ENCODE measurements at regions of chr11 and their contacts with region 1.

Region 1: GRCh38 chr11:120511116-120511819 is at the start of gene GRIK4:
- DNase-seq: peak; percentile 63 to 97 (median 82)
- ATAC-seq: peak; percentile 93 to 97 (median 95)
- H3K4me3 ChIP-seq: peak within 1 kb of the TSS in 2 of 4 donors; percentile 38 to 46
- H3K27ac ChIP-seq: no peak within 1 kb of the TSS
- H3K4me1 ChIP-seq: no peaks in the 10 kb centered on the region
- H3K27me3 ChIP-seq: peaks cover 0 to 15% (median 2%) of the 10 kb centered on the region in 4 donors
- CTCF ChIP-seq: peak; percentile 87 to 96 (median 94)
- total RNA-seq, gene GRIK4: not detected

Region 2: DNA sequence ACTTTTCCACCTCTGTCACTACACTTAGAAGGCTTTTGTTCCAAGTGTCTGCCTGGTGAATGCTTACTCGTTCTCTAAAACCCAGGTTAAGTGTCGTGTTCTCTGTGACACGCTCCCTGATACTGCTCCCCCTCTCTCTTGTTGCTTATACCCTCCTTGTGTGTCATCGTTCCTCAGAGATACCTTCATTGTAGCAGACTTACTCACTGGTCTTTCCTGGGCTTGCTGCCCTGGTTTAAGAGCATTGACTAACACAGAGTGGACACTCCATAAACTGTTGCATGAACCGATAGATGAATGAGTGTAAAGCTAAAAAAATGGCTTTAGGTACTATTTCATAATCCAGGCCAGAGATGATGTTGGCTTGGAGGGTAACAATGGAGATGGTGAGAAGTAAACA is 171.6 kb after region 1 on chr11:
- intact Hi-C with region 1: loop called (anchors 2 to 10 kb)
- DNase-seq: no peak
- ATAC-seq: no peak
- H3K4me3 ChIP-seq: no peak overlapping the region
- H3K27ac ChIP-seq: no peak overlapping the region
- H3K4me1 ChIP-seq: no peaks in the 10 kb centered on the region
- H3K27me3 ChIP-seq: no peaks in the 10 kb centered on the region
- CTCF ChIP-seq: no peak

Region 3: DNA sequence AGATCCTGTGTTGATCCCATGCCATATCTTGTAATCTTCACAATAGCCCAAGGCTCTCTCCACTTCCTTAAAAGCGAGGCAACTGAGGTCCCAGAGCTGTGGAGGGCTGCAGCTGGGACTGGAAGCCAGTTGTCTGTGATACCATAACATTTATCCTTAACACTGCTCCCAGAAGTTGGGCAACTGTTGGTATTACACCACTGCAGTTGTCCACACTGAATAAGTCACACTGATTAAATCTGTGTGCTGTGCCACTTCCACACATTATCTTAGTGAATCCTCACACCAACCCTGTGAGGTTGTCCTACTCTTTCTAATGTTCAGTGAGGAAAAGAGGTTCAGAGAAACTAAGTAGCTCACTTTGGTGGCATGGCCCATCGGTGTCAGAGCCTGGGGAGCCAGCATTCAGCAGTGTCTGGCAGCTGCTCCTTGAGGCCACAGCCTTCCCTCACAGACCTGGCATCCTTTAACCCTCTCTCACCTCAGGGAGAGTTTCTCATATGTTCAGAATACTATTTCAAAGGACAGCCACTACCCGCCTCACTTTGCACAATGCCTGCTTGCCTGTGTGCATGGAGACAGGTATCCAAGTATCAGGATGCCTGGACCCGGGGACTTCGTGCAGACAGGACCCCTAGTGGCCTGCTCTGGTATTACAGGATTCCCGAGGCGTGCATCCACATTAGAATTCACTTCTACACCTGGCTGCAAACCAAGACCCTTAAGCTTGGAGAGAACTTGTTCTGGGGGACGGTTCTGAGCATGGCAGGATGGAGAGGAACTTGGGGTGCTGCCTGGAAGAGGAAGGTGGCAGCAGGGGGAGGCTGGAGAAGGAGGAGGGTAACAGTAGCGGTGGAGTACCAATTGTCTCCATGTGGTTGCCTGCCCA is 290.8 kb after region 1 on chr11:
- intact Hi-C with region 1: loop called in 1 of 3 experiments (anchors 5 kb)
- DNase-seq: peak in 5 of 6 donors; percentile 24 to 86 (median 61)
- ATAC-seq: peak in 3 of 4 donors; percentile 75 to 87 (median 84)
- H3K4me3 ChIP-seq: no peak overlapping the region
- H3K27ac ChIP-seq: no peak overlapping the region
- H3K4me1 ChIP-seq: no peaks in the 10 kb centered on the region
- H3K27me3 ChIP-seq: peaks cover 0 to 4% (median 0%) of the 10 kb centered on the region in 4 donors
- CTCF ChIP-seq: peak; percentile 81 to 95 (median 85)

Region 4: DNA sequence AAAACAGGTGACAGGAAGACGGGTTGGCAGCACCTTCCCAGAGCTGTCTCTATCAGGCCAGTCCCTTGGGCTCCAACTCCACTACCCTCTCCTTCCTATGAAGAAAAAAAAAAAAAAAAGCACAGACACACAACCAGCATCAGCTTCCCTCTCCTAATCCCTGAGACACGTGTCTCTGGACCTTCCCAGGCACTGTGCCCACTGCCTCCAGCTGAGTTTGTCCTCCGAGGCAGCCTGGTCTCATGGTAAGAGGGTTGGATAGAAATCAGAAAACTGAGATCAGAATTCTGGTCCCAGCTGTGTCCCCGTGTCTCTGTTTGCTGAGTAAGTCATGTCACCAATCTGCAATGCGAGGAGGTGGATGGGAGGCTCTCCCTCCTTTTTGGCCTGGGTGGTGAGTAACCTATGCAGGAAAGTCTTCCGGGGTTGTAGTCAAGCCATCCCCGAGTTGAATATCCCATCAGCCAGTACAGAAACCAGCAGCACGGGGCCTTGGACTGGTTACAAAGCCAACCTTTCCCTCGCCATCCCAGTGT is 318.9 kb after region 1 on chr11:
- intact Hi-C with region 1: no loop called
- DNase-seq: no peak
- ATAC-seq: no peak
- H3K4me3 ChIP-seq: no peak overlapping the region
- H3K27ac ChIP-seq: no peak overlapping the region
- H3K4me1 ChIP-seq: no peaks in the 10 kb centered on the region
- H3K27me3 ChIP-seq: no peaks in the 10 kb centered on the region
- CTCF ChIP-seq: no peak

Region 5: DNA sequence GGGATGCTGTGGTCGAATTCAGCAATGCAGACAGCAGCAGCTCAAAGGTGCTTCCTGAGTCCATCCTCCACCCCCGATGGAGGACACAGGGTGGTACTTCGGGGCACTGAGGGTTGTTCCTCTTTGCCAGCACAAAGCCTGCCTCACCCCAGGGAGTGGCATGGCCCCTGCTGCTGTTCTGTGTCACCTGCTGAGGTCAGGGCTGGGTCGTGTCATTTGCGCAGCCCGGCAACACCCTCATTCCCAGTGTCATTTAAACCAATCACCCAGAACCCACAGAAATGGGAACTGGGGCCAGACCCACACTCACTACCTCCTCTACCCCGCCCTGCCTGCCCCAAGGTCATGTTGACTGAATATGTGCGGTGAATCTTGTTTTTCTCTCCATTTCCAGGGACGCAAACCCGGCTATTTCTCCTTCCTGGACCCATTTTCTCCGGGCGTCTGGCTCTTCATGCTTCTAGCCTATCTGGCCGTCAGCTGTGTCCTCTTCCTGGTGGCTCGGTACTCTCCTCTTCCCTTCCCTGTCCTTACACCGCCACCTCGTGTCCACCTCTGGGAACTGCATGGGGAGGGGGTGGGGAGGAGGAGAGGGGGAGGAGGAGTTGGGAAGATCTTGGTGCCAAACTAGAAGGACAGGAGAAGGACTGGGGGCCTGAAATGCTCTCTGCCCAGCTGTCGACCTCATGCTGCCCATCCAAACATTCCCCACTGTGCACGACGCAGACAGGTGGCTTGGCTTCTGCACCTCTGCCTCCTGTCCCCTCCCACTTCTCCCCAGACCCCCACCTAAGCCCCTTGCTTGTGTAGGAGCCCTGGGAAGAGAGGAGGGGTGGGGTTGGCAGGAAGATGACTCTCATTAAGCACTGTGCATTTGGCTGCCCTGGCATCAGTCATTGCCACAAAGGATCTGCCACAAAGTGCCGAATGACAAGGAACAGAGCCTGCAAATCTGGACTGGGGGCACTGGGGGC is 441.5 kb after region 1 on chr11:
- intact Hi-C with region 1: loop called in 1 of 3 experiments (anchors 10 kb)
- DNase-seq: peak; percentile 61 to 90 (median 79)
- ATAC-seq: peak; percentile 88 to 100 (median 98)
- H3K4me3 ChIP-seq: peak overlapping the region in 1 of 4 donors; percentile 22
- H3K27ac ChIP-seq: no peak overlapping the region
- H3K4me1 ChIP-seq: no peaks in the 10 kb centered on the region
- H3K27me3 ChIP-seq: no peaks in the 10 kb centered on the region
- CTCF ChIP-seq: peak; percentile 27 to 65 (median 51)

Measured in pancreas (tissue), 10 donors.